Mammary epithelial cell (primary cell): ENCODE measurements at regions of chr7 and their contacts with region 1.

Region 1: GRCh38 chr7:4631664-4632171 is 50.4 kb upstream of the FOXK1 start:
- DNase-seq: peak; percentile 87
- H3K4me3 ChIP-seq: peak overlapping the region in 2 of 3 experiments; percentile 19 to 36
- H3K27ac ChIP-seq: no peak overlapping the region
- H3K4me1 ChIP-seq: peaks cover 12% of the 10 kb centered on the region
- H3K27me3 ChIP-seq: no peaks in the 10 kb centered on the region
- CTCF ChIP-seq: peak; percentile 74 to 81

Region 2: GRCh38 chr7:3309140-3309539 is 1322.6 kb before region 1 on chr7:
- CTCF ChIA-PET with region 1: interaction called, 14 read pairs
- dilution Hi-C with region 1: no loop called
- in situ Hi-C with region 1: no loop called
- intact Hi-C with region 1: no loop called
- DNase-seq: peak; percentile 64
- H3K4me3 ChIP-seq: no peak overlapping the region
- H3K27ac ChIP-seq: no peak overlapping the region
- H3K4me1 ChIP-seq: no peaks in the 10 kb centered on the region
- H3K27me3 ChIP-seq: no peaks in the 10 kb centered on the region
- CTCF ChIP-seq: no peak

Region 3: DNA sequence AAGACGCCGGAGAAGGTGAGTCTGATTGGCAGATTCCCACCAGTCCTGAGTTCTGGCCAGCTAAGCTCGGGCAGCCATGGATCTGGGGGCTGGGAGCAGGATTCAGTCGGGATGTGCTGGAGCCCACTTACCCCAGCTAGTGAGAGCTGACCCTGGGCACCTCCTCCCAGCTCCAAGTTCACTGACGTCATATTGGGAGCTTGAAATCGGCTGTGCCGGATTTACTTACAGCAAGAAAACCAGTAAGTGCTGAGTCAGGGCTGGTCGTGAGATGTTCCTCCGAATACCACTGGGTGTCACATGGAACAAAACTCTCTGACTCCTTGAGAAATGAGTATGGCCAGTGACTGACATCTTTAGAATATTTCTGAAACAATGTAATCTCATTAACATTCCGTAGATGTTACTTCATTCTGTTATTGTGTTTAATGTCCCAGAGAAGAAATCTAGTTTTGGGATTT is 709.5 kb before region 1 on chr7:
- CTCF ChIA-PET with region 1: interaction called, 5 read pairs
- dilution Hi-C with region 1: no loop called
- in situ Hi-C with region 1: no loop called
- intact Hi-C with region 1: loop called (anchors 1 kb)
- DNase-seq: peak; percentile 70
- H3K4me3 ChIP-seq: no peak overlapping the region
- H3K27ac ChIP-seq: no peak overlapping the region
- H3K4me1 ChIP-seq: no peaks in the 10 kb centered on the region
- H3K27me3 ChIP-seq: no peaks in the 10 kb centered on the region
- CTCF ChIP-seq: peak in 1 of 2 donors; percentile 33

Region 4: GRCh38 chr7:4216016-4216415 is 415.7 kb before region 1 on chr7:
- CTCF ChIA-PET with region 1: no interaction called
- dilution Hi-C with region 1: no loop called
- in situ Hi-C with region 1: no loop called
- intact Hi-C with region 1: loop called (anchors 5 kb)
- DNase-seq: peak; percentile 39
- H3K4me3 ChIP-seq: no peak overlapping the region
- H3K27ac ChIP-seq: no peak overlapping the region
- H3K4me1 ChIP-seq: no peaks in the 10 kb centered on the region
- H3K27me3 ChIP-seq: no peaks in the 10 kb centered on the region
- CTCF ChIP-seq: no peak

Region 5: DNA sequence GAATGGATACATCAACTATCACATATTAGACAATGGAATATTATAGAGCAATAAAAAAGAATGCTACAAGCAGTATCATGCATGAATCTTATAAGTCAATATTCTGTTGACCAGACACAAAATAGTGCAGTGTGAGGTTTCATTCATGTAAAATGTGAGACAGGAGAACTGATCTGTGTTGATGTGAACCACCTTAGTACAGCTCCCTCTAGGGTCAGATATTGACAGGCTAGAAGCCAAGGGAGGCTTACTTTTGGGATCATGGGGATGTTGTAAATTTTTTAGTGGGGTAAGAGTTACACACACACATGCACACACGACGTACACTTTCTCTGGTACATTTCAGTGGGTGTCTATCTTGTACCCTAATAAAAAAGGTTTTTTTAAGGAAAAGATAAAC is 181.2 kb before region 1 on chr7:
- CTCF ChIA-PET with region 1: no interaction called
- dilution Hi-C with region 1: no loop called
- in situ Hi-C with region 1: no loop called
- intact Hi-C with region 1: no loop called
- DNase-seq: no peak
- H3K4me3 ChIP-seq: no peak overlapping the region
- H3K27ac ChIP-seq: no peak overlapping the region
- H3K4me1 ChIP-seq: no peaks in the 10 kb centered on the region
- H3K27me3 ChIP-seq: no peaks in the 10 kb centered on the region
- CTCF ChIP-seq: no peak

Region 6: GRCh38 chr7:4610768-4611467 is 20.8 kb before region 1 on chr7:
- CTCF ChIA-PET with region 1: interaction called, 10 read pairs
- dilution Hi-C with region 1: no loop called
- in situ Hi-C with region 1: no loop called
- intact Hi-C with region 1: loop called (anchors 1 kb)
- DNase-seq: peak; percentile 60
- H3K4me3 ChIP-seq: no peak overlapping the region
- H3K27ac ChIP-seq: no peak overlapping the region
- H3K4me1 ChIP-seq: no peaks in the 10 kb centered on the region
- H3K27me3 ChIP-seq: no peaks in the 10 kb centered on the region
- CTCF ChIP-seq: peak; percentile 76 to 79